Adrenal gland (tissue), 19 donors: ENCODE measurements at regions of chr4 and their contacts with region 1.

Region 1: DNA sequence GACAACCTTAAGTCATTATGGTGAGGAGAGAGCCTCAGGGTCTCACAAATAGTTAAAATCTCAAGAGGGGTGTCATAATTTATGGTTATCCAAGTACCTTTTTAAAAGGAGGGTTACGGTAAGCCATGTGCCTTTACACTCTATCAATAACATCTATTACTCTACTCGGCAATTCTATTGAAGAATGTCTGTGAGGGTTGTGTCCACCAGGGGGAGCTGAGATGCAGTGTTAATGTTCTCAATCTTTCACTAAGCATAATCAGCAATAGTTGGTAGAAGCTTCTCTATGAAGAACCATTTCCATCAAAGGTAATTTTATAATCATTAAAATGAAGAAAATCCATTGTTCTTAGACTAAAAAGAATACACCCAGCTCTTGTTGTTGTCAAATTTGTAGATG is 457.4 kb downstream of the CENPC start:
- DNase-seq: peak; percentile 19 to 84 (median 49)
- H3K4me3 ChIP-seq: no peak overlapping the region
- H3K27ac ChIP-seq: no peak overlapping the region
- H3K4me1 ChIP-seq: no peaks in the 10 kb centered on the region
- H3K27me3 ChIP-seq: no peaks in the 10 kb centered on the region
- CTCF ChIP-seq: peak; percentile 42 to 67 (median 56)
- POLR2A ChIP-seq: no peak

Region 2: GRCh38 chr4:67327262-67328017 is 239.5 kb after region 1 on chr4:
- intact Hi-C with region 1: loop called in 1 of 2 experiments (anchors 10 kb)
- DNase-seq: peak; percentile 49 to 81 (median 65)
- H3K4me3 ChIP-seq: no peak overlapping the region
- H3K27ac ChIP-seq: no peak overlapping the region
- H3K4me1 ChIP-seq: peaks cover 0 to 3% of the 10 kb centered on the region in 2 donors
- H3K27me3 ChIP-seq: no peaks in the 10 kb centered on the region
- CTCF ChIP-seq: peak; percentile 79 to 93 (median 82)
- POLR2A ChIP-seq: no peak

Region 3: GRCh38 chr4:67393699-67394281 is 305.9 kb after region 1 on chr4:
- intact Hi-C with region 1: loop called in 1 of 2 experiments (anchors 5 kb)
- DNase-seq: peak in 3 of 7 donors; percentile 23 to 49 (median 43)
- H3K4me3 ChIP-seq: no peak overlapping the region
- H3K27ac ChIP-seq: no peak overlapping the region
- H3K4me1 ChIP-seq: no peaks in the 10 kb centered on the region
- H3K27me3 ChIP-seq: no peaks in the 10 kb centered on the region
- CTCF ChIP-seq: peak; percentile 55 to 92 (median 74)
- POLR2A ChIP-seq: no peak